AG04449 (cell line): ENCODE measurements at regions of chr2 and their contacts with region 1.

Region 1: GRCh38 chr2:213151437-213152064 is at the start of gene IKZF2:
- DNase-seq: no peak
- H3K4me3 ChIP-seq: peak within 1 kb of the TSS; percentile 79
- CTCF ChIP-seq: no peak

Region 2: DNA sequence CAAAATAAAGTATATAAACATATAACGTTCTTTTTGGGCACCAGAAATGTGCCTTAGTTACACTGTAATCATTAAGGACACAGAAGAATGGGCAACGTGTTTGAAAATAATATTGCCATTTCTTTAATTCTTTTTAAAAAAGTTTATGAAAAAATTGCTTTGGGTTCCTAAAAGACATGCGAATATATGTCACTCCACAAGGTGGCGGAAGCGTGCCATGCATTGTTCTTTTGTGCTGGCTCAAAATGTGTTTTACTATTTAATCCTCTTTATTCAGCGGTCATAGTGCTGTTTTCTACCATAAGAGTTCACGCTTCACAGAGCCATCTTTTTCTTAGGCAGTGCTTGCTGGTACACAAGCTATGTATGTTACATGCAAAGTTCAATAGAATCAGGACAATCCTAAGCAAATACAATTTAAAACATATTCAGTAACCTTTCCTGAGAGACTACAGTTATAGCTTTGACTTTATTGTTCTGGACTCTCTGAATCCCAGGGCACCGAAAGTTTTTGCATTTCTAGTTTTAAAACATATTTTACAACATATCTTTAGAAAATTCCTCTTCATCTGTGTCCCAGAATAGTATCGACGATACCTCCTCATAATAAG is 465.2 kb before region 1 on chr2:
- CTCF ChIA-PET with region 1: interaction called, 15 read pairs
- POLR2A ChIA-PET with region 1: no interaction called
- DNase-seq: peak; percentile 5
- H3K4me3 ChIP-seq: no peak overlapping the region
- CTCF ChIP-seq: peak; percentile 68

Region 3: DNA sequence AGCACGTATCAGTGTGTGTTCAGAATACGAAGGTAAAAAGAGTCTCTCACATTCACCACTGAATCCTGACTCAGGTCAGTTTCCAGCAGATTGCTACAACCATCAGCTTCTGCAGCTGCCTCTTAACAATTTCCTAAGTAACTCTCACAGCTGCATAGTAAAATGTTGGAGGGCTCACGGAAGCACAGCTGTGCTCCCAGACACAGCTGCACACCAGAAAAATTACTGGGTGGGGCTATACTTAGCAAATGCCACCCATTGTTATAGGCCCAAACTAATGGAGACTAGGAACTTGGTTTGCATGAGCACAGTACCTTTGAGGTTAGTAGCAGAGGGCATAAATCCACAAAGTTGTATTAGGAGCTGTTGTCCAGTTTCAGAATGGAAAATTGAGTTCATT is 459.1 kb before region 1 on chr2:
- CTCF ChIA-PET with region 1: interaction called, 11 read pairs
- POLR2A ChIA-PET with region 1: no interaction called
- DNase-seq: no peak
- H3K4me3 ChIP-seq: no peak overlapping the region
- CTCF ChIP-seq: no peak

Region 4: DNA sequence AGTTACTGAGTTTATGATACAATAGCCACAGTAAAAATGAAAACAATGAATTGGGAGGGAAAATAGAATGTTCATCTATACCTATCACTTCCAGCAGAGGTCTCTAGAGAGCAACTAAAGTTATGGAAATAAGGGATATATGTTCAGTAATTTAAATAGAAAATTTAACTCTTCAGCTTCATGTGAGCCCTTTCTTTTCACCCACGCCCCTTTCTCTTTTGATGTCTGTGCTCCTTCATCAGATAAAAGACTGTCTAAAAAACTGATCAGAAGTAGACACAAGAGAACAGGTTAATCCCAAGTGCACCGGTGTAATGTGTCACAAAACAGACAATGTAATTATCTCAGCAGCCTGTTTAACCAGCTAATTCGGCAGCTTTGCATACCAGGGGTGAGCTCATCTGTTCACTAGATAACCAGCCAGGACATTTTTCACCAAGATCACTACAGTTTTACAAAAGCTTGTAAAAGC is 374.5 kb before region 1 on chr2:
- CTCF ChIA-PET with region 1: interaction called, 229 read pairs
- POLR2A ChIA-PET with region 1: no interaction called
- DNase-seq: no peak
- H3K4me3 ChIP-seq: peak overlapping the region; percentile 7; the same call in 1 of the 2 replicates
- CTCF ChIP-seq: peak; percentile 48

Region 5: DNA sequence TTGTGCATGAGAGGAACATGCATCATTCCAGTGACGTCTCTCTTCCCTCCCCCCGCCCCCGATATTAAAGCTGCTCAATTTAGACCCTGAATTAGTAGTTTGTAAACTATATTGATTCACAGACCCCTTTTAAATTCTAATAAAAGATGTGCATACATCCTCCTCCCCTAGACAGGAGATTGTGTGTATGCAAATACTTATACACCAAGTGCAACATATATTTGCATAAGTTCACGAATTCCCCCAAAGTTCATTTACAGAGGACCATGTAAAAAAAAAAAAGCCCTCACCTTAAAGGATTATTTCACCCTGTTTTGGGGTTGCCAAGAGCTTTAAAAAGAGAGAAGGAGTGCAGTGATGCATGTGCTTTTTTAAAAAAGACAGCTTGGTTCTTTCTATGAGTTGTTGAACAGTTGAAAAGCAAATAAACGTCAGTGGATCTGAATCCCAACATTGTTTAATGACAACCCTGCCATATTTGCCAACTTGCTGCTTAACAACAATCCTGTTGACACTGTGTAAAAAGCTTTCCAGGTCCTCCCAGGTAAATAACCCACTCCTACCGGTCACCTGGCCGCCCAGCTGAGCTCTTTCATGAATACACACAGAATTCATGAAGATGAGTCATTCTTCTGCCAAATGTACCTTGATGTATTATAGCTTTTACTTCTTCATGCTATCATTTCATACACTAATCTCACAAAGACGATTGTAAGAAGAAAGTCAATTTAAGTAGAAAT is 211.6 kb before region 1 on chr2:
- CTCF ChIA-PET with region 1: no interaction called
- POLR2A ChIA-PET with region 1: no interaction called
- DNase-seq: no peak
- H3K4me3 ChIP-seq: no peak overlapping the region
- CTCF ChIP-seq: no peak

Region 6: DNA sequence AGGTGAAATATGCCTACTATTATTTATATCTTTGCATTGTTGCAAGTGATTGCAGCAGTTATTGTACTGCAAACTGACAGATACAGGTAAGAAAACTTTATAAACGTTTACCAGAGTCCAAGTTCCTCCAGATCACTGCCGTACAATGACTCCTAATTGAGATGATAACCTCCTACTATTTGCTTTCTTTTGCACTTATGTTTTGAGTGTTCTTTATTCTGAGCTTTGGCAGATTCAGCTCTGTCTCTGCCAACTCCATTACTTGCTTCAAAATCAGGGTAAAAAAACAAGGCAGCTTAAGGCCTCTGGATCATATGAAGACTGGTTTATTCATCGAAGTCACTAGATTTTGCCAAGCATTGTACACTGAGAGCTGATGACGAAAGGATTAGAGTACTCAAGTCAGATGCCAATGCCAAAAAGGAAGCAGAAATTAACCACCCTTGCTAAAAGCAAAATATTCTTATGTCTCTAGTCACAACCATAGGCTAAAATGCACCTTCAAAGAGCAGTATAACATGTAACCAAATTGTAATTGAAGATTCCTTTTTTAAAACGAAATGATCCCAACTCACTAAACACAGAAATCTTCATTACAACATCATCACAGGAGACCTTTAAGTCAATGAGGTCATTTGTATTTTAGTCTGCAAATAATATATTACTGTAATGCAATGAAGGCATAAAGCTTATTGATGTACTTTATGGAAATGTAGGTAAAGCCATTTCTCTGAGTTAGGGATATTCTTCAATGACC is 10.4 kb after region 1 on chr2:
- CTCF ChIA-PET with region 1: interaction called, 32 read pairs
- POLR2A ChIA-PET with region 1: no interaction called
- DNase-seq: no peak
- H3K4me3 ChIP-seq: no peak overlapping the region
- CTCF ChIP-seq: no peak

Region 7: DNA sequence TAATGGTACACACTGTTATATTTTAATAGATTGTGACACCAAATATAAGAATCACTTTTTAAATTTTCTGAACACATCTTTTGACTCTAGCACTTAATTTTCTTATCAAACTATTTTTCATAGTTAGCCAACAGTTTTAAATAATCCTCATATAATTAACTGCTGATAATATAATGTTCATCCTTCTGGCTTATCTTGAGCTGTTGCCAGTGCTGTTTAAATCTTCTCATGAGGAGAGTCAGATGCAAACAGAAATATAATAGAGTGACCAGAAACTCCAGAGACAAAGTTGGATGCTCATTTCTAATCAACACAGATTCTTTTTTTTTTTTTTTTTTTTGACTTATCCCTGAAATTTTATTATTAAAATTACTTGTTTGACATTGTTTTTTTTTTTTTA is 415.3 kb after region 1 on chr2:
- CTCF ChIA-PET with region 1: no interaction called
- POLR2A ChIA-PET with region 1: no interaction called
- DNase-seq: no peak
- H3K4me3 ChIP-seq: no peak overlapping the region
- CTCF ChIP-seq: no peak